Activated T-helper 1 cell treated with anti-CD3 and anti-CD28 coated beads, Interleukin-12 subunit alpha, Interleukin-12 subunit beta, Interleukin-2, Interleukin-4 antibody, amounts not matched to agents 30 ng/mL and 10 ng/mL and 1 ng/mL, durations not matched to agents 14 hours and 24 hours and 36 hours (primary cell): ENCODE measurements at regions of chr6 and their contacts with region 1.

Region 1: GRCh38 chr6:143940011-143940597 is 68.0 kb downstream of the PLAGL1 start:
- DNase-seq: peak; percentile 26
- H3K4me3 Mint-ChIP-seq: no peak overlapping the region
- H3K27ac Mint-ChIP-seq: no peak overlapping the region
- H3K4me1 Mint-ChIP-seq: peaks cover 9% of the 10 kb centered on the region
- H3K27me3 Mint-ChIP-seq: peaks cover 3% of the 10 kb centered on the region

Region 2: GRCh38 chr6:143575440-143575839 is 364.7 kb before region 1 on chr6:
- intact Hi-C with region 1: loop called (anchors 1 kb)
- DNase-seq: peak; percentile 48
- H3K4me3 Mint-ChIP-seq: no peak overlapping the region
- H3K27ac Mint-ChIP-seq: no peak overlapping the region
- H3K4me1 Mint-ChIP-seq: peaks cover 12% of the 10 kb centered on the region
- H3K27me3 Mint-ChIP-seq: no peaks in the 10 kb centered on the region

Region 3: DNA sequence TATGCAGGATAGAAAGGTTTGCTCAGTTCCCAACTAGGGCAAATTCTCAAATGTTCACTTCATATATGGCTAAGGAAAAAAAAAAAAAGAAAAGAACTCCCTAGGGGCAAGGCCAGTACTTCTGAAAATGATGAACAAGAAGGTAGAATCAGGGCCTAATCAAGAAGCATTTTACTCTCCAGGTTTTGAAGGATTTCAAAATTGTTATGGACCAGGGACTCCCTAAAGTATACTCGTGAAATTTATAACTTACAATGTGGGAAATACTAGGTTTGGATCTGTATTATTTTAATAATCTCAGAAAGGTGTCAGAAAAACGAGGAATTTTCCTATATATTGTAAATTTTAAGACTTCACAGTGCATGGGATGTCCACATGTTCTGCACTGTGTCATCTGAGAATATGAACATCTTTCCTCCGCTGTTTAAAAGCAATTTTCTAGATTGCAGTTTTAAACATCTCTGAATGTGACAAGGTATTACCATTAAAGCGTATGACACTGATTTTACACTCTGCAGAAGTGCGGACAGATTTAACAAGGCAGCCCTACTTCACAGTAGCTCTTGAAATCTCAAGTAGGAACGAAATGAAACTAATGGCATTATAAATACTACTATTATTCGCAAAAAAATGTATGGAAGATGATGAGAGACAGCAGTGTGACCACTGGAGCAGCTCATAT is 54.0 kb after region 1 on chr6:
- intact Hi-C with region 1: loop called (anchors 5 kb)
- DNase-seq: no peak
- H3K4me3 Mint-ChIP-seq: no peak overlapping the region
- H3K27ac Mint-ChIP-seq: no peak overlapping the region
- H3K4me1 Mint-ChIP-seq: no peaks in the 10 kb centered on the region
- H3K27me3 Mint-ChIP-seq: peaks cover 4% of the 10 kb centered on the region

Region 4: DNA sequence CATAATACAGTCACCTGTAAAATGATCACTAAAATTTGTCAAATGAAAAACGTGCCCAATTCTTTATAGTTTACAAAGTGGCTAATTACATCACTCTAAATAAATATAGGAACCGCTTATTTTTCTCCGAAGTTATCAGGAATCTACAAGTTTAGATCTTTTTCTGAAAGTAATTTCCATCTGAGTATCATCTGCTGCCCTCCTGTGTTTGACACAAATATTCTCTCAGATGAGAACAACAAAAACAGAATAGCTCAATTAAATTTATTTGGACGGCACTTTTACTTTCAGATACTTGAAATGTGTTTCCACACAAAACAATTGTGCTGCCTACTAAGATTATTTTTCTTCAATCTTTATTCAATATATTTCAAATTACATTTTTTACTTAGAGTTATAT is 150.3 kb after region 1 on chr6:
- intact Hi-C with region 1: loop called (anchors 1 kb)
- DNase-seq: no peak
- H3K4me3 Mint-ChIP-seq: no peak overlapping the region
- H3K27ac Mint-ChIP-seq: no peak overlapping the region
- H3K4me1 Mint-ChIP-seq: peaks cover 23% of the 10 kb centered on the region
- H3K27me3 Mint-ChIP-seq: no peaks in the 10 kb centered on the region